ENCODE measurements at regions of chr3 and their contacts with region 1.

Region 1: GRCh38 chr3:63818281-63819150 is 583 bp upstream of the C3orf49 start:
- DNase-seq: peak; percentile 31 to 69
- ATAC-seq: peak; percentile 72

Region 2: GRCh38 chr3:62632510-62633214 is 1185.9 kb before region 1 on chr3:
- intact Hi-C with region 1: loop called in 1 of 2 experiments (anchors 10 kb)
- DNase-seq: no peak
- ATAC-seq: no peak

Region 3: GRCh38 chr3:63349583-63350521 is 468.7 kb before region 1 on chr3:
- intact Hi-C with region 1: loop called in 1 of 2 experiments (anchors 5 kb)
- DNase-seq: peak; percentile 51 to 58
- ATAC-seq: peak; percentile 52